ENCODE measurements at regions of chr3 and their contacts with region 1.

Region 1: GRCh38 chr3:56801662-56802377 is at the start of gene ARHGEF3:
- DNase-seq: peak; percentile 80 to 89 (median 88)
- ATAC-seq: peak; percentile 94
- H3K4me3 ChIP-seq: peak within 1 kb of the TSS; percentile 88
- H3K4me3 Mint-ChIP-seq: peak within 1 kb of the TSS; percentile 93 to 98 (median 96)
- H3K27ac ChIP-seq: peak within 1 kb of the TSS; percentile 83
- H3K27ac Mint-ChIP-seq: peak within 1 kb of the TSS; percentile 82 to 96 (median 91)
- H3K4me1 ChIP-seq: peaks cover 22 to 30% of the 10 kb centered on the region in 2 donors
- H3K4me1 Mint-ChIP-seq: peaks cover 25 to 49% (median 35%) of the 10 kb centered on the region in 7 donors
- H3K27me3 ChIP-seq: no peaks in the 10 kb centered on the region
- H3K27me3 Mint-ChIP-seq: no peaks in the 10 kb centered on the region
- total RNA-seq, gene ARHGEF3: 79.6 to 99.7 (median 87.0) TPM

Region 2: DNA sequence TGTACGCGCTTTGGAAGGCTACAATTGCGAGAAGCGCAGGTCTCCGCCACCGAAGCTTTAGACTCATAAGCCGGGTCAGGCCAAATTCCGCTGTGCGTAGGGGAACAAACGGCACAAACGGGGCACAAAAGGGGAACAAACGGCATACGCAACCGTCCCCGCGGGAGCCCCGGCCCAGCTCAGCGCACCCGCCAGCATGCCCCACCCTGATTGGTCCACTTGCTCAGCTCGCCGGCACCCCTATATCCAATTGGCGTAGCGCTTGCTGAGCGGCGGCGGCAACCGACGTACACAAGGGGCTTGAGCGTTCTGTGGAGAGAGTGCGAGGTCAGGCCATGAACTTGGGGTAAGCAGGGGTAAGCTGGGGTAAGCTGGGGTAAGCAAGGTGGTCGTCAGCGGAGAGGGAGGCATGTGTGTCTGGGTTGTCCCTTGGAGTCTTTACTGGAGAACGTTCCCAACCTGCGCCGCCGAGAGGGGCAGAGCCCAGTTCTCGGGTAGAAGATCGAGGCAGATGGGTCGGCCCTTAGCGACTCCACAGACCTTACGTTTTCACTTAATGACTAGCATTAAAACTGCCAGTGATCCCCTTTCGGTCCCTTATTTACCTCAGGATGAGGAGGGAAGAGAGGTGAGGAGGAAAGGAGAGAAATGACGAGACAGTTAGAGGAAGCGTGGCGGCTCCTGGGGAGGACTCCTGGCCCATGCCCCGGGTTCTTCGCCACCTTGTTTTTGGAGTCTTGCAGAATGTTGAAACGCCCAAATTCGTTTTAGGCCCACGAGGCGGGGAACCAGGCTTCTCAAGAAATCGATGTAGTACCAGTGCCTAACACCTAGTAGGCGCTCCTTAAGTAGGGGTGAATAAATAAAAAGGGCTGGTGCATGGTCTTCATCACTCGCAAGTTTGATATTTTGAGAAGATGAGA is 244.7 kb before region 1 on chr3 and contains the start of gene CCDC66:
- CTCF ChIA-PET with region 1: interaction called, 8 read pairs
- POLR2A ChIA-PET with region 1: interaction called, 8 read pairs
- intact Hi-C with region 1: loop called (anchors 1 to 2 kb)
- DNase-seq: peak; percentile 85 to 95 (median 93)
- ATAC-seq: peak; percentile 96
- H3K4me3 ChIP-seq: peak within 1 kb of the TSS; percentile 96
- H3K4me3 Mint-ChIP-seq: peak within 1 kb of the TSS; percentile 91 to 100 (median 98)
- H3K27ac ChIP-seq: peak within 1 kb of the TSS; percentile 99
- H3K27ac Mint-ChIP-seq: peak within 1 kb of the TSS; percentile 93 to 100 (median 98)
- H3K4me1 ChIP-seq: peaks cover 9 to 17% of the 10 kb centered on the region in 2 donors
- H3K4me1 Mint-ChIP-seq: peaks cover 12 to 51% (median 38%) of the 10 kb centered on the region in 7 donors
- H3K27me3 ChIP-seq: no peaks in the 10 kb centered on the region
- H3K27me3 Mint-ChIP-seq: peaks cover 0 to 25% (median 0%) of the 10 kb centered on the region in 5 donors
- total RNA-seq, gene CCDC66: 38.6 to 115 (median 77.3) TPM

Region 3: GRCh38 chr3:56702490-56703315 is 99.1 kb before region 1 on chr3:
- CTCF ChIA-PET with region 1: interaction called, 169 read pairs
- POLR2A ChIA-PET with region 1: interaction called, 101 read pairs
- intact Hi-C with region 1: loop called (anchors 1 kb)
- DNase-seq: peak in 7 of 9 donors; percentile 52 to 75 (median 67)
- ATAC-seq: peak; percentile 86
- H3K4me3 ChIP-seq: no peak overlapping the region
- H3K4me3 Mint-ChIP-seq: no peak overlapping the region
- H3K27ac ChIP-seq: no peak overlapping the region
- H3K27ac Mint-ChIP-seq: peak overlapping the region in 2 of 9 donors; percentile 1 to 22
- H3K4me1 ChIP-seq: peaks cover 3 to 11% of the 10 kb centered on the region in 2 donors
- H3K4me1 Mint-ChIP-seq: peaks cover 15 to 35% (median 24%) of the 10 kb centered on the region in 7 donors
- H3K27me3 ChIP-seq: no peaks in the 10 kb centered on the region
- H3K27me3 Mint-ChIP-seq: no peaks in the 10 kb centered on the region

Region 4: DNA sequence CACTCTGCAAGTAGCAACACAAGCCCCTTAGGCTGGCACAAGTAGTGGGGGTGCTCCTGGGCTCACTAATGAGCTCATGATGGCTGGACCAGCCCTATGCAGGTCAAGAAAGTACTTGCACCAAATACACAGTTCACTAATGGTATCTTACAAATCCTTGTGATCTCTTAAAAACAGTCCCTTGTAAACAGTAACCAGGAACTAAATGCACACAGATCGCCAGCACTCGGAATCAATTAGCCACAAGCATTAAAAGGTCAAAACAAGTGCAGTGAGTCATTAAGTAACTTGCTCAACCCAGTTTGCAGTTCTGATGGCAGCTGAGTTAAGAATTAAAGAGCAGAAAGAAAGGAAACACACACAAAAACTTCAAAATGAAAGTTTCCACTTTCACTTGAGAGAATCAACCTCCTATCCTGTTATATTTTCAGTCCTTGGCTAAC is 43.3 kb before region 1 on chr3:
- CTCF ChIA-PET with region 1: interaction called, 73 read pairs
- POLR2A ChIA-PET with region 1: interaction called, 115 read pairs
- intact Hi-C with region 1: loop called (anchors 1 kb)
- DNase-seq: peak in 3 of 9 donors; percentile 7 to 37 (median 27)
- ATAC-seq: peak; percentile 75
- H3K4me3 ChIP-seq: no peak overlapping the region
- H3K4me3 Mint-ChIP-seq: peak overlapping the region; percentile 34 to 83 (median 67)
- H3K27ac ChIP-seq: peak overlapping the region; percentile 51
- H3K27ac Mint-ChIP-seq: peak overlapping the region; percentile 78 to 94 (median 89)
- H3K4me1 ChIP-seq: peaks cover 44 to 47% of the 10 kb centered on the region in 2 donors
- H3K4me1 Mint-ChIP-seq: peaks cover 62 to 94% (median 89%) of the 10 kb centered on the region in 7 donors
- H3K27me3 ChIP-seq: no peaks in the 10 kb centered on the region
- H3K27me3 Mint-ChIP-seq: no peaks in the 10 kb centered on the region

Region 5: DNA sequence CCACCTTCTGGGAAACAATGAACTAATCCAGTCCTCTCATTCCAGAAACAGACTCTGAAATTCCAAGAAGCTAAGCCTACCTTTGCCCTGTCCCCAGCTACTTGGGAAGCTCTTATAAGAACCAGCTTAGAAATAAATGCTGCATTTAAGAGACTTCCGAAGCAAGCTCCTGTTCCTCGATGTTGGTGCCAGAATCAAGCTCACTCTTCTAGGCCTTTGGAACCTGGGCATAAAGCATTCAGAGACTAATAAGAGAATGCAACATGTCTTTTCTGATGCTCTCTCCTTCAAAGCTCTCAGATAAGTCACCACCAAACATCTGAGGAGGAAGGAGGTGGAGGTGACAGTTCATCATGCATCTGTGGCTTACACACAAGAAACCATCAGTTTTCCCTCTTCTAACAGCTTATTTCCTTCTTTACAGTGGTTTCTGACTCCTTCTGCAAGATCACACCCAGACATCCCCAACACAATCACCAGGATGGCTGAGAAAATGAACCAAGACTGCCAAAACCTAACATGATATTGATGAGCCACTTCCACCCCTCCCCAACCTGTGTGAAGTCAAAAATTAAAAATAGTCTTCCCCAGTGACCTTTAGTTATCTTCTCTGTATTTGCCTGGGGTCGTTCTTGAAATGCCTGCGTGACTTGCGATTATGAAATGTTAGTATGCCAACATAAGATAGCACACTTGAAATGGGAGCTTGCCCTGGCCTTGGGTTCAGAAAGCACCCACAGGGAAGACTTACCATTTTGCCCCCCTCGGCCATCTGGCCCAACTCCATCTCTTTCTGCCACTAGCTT is 11.6 kb before region 1 on chr3:
- CTCF ChIA-PET with region 1: interaction called, 176 read pairs
- POLR2A ChIA-PET with region 1: interaction called, 286 read pairs
- intact Hi-C with region 1: loop called (anchors 1 kb)
- DNase-seq: peak in 7 of 9 donors; percentile 25 to 56 (median 48)
- ATAC-seq: peak; percentile 75
- H3K4me3 ChIP-seq: peak overlapping the region; percentile 19
- H3K4me3 Mint-ChIP-seq: peak overlapping the region; percentile 53 to 82 (median 74)
- H3K27ac ChIP-seq: peak overlapping the region; percentile 57
- H3K27ac Mint-ChIP-seq: peak overlapping the region; percentile 76 to 98 (median 89)
- H3K4me1 ChIP-seq: peaks cover 72 to 77% of the 10 kb centered on the region in 2 donors
- H3K4me1 Mint-ChIP-seq: peaks cover 67 to 97% (median 89%) of the 10 kb centered on the region in 7 donors
- H3K27me3 ChIP-seq: no peaks in the 10 kb centered on the region
- H3K27me3 Mint-ChIP-seq: no peaks in the 10 kb centered on the region

Region 6: GRCh38 chr3:56915966-56916586 is 114.3 kb after region 1 on chr3:
- CTCF ChIA-PET with region 1: interaction called, 29 read pairs
- POLR2A ChIA-PET with region 1: interaction called, 62 read pairs
- intact Hi-C with region 1: loop called (anchors 1 kb)
- DNase-seq: peak; percentile 33 to 82 (median 76)
- ATAC-seq: peak; percentile 94
- H3K4me3 ChIP-seq: peak overlapping the region; percentile 97
- H3K4me3 Mint-ChIP-seq: peak overlapping the region; percentile 89 to 98 (median 94)
- H3K27ac ChIP-seq: peak overlapping the region; percentile 81
- H3K27ac Mint-ChIP-seq: peak overlapping the region; percentile 92 to 99 (median 98)
- H3K4me1 ChIP-seq: peaks cover 42 to 47% of the 10 kb centered on the region in 2 donors
- H3K4me1 Mint-ChIP-seq: peaks cover 54 to 86% (median 83%) of the 10 kb centered on the region in 7 donors
- H3K27me3 ChIP-seq: no peaks in the 10 kb centered on the region
- H3K27me3 Mint-ChIP-seq: no peaks in the 10 kb centered on the region

Region 7: DNA sequence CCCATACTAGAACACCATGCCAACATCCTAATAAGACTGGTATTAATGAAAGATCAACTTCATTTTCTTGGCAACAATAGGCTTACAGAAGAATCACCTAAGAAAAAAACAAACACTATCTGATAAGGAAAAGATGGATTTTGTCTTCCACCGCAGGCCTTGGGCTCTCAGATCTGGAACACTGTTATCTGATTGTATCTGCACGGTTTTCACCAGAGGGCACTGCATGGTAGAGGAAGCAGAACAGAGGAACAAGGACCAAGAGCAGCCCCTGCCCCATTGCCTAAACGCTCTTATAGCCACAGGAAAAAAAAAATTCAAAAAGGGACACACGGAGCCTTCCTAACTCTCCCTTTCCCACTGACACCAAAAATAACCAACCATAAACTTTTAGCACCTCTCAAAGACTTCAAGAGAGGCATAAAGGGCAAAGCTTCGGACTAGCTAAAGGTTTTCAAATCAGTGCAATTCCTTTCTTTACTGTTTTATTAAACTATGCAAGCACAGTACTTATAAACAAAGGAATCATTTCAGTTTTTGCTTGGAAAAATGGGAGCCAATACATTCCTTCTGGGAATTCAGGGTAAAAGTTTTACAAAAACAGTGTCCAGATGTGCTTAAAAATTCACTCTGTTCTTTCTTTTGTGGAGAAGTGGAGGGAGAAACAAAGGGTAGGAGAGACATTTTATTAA is 340.0 kb after region 1 on chr3:
- CTCF ChIA-PET with region 1: no interaction called
- POLR2A ChIA-PET with region 1: no interaction called
- intact Hi-C with region 1: no loop called
- DNase-seq: no peak
- ATAC-seq: no peak
- H3K4me3 ChIP-seq: no peak overlapping the region
- H3K4me3 Mint-ChIP-seq: no peak overlapping the region
- H3K27ac ChIP-seq: no peak overlapping the region
- H3K27ac Mint-ChIP-seq: no peak overlapping the region
- H3K4me1 ChIP-seq: no peaks in the 10 kb centered on the region
- H3K4me1 Mint-ChIP-seq: no peaks in the 10 kb centered on the region
- H3K27me3 ChIP-seq: no peaks in the 10 kb centered on the region
- H3K27me3 Mint-ChIP-seq: peaks cover 14 to 60% (median 26%) of the 10 kb centered on the region in 5 donors

Region 8: GRCh38 chr3:57227204-57227929 is 425.5 kb after region 1 on chr3 and contains the start of gene APPL1:
- CTCF ChIA-PET with region 1: no interaction called
- POLR2A ChIA-PET with region 1: no interaction called
- intact Hi-C with region 1: loop called in 1 of 2 experiments (anchors 2 kb)
- DNase-seq: peak; percentile 76 to 97 (median 82)
- ATAC-seq: peak; percentile 96
- H3K4me3 ChIP-seq: peak within 1 kb of the TSS; percentile 88
- H3K4me3 Mint-ChIP-seq: peak within 1 kb of the TSS; percentile 89 to 95 (median 93)
- H3K27ac ChIP-seq: peak within 1 kb of the TSS; percentile 71
- H3K27ac Mint-ChIP-seq: peak within 1 kb of the TSS; percentile 72 to 90 (median 86)
- H3K4me1 ChIP-seq: peaks cover 9 to 12% of the 10 kb centered on the region in 2 donors
- H3K4me1 Mint-ChIP-seq: peaks cover 17 to 38% (median 29%) of the 10 kb centered on the region in 7 donors
- H3K27me3 ChIP-seq: no peaks in the 10 kb centered on the region
- H3K27me3 Mint-ChIP-seq: peaks cover 0 to 5% (median 0%) of the 10 kb centered on the region in 5 donors
- total RNA-seq, gene APPL1: 25.4 to 42.1 (median 29.2) TPM

Measured in naive thymus-derived CD4-positive, alpha-beta T cell (primary cell).